ENCODE measurements at regions of chr22 and their contacts with region 1.

Region 1: DNA sequence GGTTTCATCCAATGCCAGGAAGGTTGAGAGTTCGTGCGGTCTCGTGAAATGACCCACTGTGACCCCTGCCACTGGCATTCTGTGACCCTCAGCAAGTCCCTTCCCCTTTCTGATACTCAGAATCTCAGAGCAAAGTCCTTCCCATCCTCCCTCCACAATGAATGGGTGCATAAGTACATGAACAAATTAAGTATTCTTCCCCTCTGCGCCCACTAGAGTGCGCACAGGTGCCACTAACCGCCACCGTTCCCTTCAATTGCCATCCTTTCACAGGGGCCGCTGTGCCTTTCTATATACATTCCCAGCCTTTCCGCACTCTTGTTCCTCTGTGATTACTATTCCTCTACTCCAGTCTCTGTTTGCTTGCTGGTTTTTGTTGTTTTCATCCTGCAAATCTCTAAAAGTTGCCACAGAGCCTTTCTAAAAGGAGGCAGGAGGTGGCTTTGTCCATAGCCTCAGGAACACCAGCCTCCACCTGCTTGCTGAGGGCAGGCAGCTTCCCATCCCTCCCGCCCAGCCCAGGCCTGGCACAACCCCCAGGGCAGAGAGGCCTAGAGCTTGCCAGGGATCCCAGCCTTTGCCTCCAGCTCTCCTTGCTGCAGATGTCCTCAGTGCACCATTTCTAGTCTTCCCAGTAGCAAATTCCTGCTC is 6.7 kb upstream of the AP1B1 start:
- DNase-seq: peak; percentile 76
- H3K4me3 Mint-ChIP-seq: no peak overlapping the region
- H3K27ac Mint-ChIP-seq: peak overlapping the region; percentile 33
- H3K4me1 Mint-ChIP-seq: peaks cover 54% of the 10 kb centered on the region
- H3K27me3 Mint-ChIP-seq: peaks cover 6% of the 10 kb centered on the region
- CTCF ChIP-seq: peak; percentile 72

Region 2: DNA sequence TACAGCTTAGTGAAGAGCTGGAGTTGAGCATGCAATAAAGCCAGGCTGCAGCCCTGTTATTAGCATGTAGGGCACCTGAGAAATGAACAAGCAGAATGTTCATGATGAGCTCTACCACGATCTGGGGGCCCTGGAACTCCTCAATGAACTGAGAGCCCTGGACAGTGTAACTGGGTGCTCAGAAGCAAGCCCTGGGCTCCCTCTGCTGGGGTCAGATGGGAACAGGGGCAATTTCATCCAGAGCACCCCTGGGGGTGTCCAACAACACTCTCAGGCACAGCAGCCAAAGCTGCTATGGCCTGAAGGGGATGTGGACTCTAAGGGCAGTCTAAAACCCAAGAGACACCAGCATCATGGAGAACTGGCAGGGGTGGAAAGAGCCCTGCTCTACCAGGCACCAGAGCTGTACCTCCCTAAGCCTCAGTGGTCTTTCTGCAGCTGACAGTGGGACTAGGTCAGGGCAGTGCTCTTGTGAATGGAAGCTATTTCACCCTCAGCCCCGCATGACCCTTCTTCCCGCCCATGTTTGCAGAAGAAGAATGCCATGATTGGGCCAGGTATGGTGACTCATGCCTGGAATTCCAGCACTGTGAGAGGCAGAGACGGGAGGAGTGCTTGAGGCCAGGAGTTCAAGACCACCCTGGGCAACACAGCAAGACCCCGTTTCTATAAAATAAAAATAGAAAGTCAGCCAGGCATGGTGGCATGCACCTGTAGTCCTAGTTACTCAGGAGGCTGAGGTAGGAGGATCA is 129.6 kb after region 1 on chr22:
- CTCF ChIA-PET with region 1: interaction called, 10 read pairs
- intact Hi-C with region 1: loop called (anchors 1 kb)
- DNase-seq: peak; percentile 64
- H3K4me3 Mint-ChIP-seq: no peak overlapping the region
- H3K27ac Mint-ChIP-seq: no peak overlapping the region
- H3K4me1 Mint-ChIP-seq: no peaks in the 10 kb centered on the region
- H3K27me3 Mint-ChIP-seq: no peaks in the 10 kb centered on the region
- CTCF ChIP-seq: peak; percentile 53